GM12878 (cell line): ENCODE measurements at regions of chr7 and their contacts with region 1.

Region 1: DNA sequence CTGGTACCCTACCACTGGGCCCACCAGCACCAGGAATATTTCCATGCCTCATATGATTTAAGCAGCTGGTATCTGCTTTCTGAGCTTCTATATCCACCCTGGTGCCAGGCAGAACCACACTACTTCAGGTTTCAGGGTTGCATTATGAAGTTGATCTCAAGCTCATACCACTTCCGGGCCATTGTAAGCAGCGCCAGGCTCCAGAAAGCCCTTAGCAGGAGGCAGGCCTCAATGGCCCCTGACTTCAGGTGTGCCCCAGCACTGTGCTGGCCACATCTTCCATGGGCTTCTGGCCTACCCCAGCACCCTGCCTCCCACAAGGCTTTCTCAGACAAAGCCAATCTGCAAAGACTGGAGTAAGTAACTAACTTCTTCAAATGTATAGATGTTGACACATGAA is 391.3 kb upstream of the GRM3 start:
- DNase-seq: no peak
- ATAC-seq: no peak
- H3K4me3 ChIP-seq: no peak overlapping the region
- H3K27ac ChIP-seq: no peak overlapping the region
- H3K4me1 ChIP-seq: no peaks in the 10 kb centered on the region
- H3K27me3 ChIP-seq: no peaks in the 10 kb centered on the region
- CTCF ChIP-seq: no peak
- EP300 ChIP-seq: no peak
- POLR2A ChIP-seq: no peak
- RAD21 ChIP-seq: no peak

Region 2: DNA sequence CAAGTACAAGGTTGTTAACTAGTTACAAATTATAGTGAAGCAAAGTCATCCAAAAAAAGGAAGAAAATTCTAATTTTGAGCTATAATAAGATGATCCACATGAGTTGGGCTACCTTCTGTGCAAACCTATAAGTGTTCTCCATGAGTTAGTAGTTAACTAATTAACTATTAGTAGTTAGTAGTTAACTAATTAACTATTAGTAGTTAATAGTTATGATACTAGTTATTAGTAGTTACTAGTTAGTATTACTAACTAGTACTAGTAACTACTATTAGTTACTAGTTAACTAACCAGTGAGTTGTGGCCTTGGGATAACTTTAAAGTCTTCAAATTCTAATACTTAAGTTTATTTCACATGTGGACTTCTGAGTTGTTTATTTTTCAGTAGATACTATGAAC is 62.1 kb before region 1 on chr7:
- CTCF ChIA-PET with region 1: no interaction called
- POLR2A ChIA-PET with region 1: no interaction called
- RAD21 ChIA-PET with region 1: no interaction called
- SMC1A ChIA-PET with region 1: no interaction called
- in situ Hi-C with region 1: no loop called
- intact Hi-C with region 1: no loop called
- DNase-seq: no peak
- ATAC-seq: no peak
- H3K4me3 ChIP-seq: no peak overlapping the region
- H3K27ac ChIP-seq: no peak overlapping the region
- H3K4me1 ChIP-seq: no peaks in the 10 kb centered on the region
- H3K27me3 ChIP-seq: no peaks in the 10 kb centered on the region
- CTCF ChIP-seq: no peak
- EP300 ChIP-seq: no peak
- POLR2A ChIP-seq: no peak
- RAD21 ChIP-seq: no peak

Region 3: GRCh38 chr7:86280150-86280549 is 27.7 kb after region 1 on chr7:
- CTCF ChIA-PET with region 1: no interaction called
- POLR2A ChIA-PET with region 1: interaction called, 11 read pairs
- RAD21 ChIA-PET with region 1: no interaction called
- SMC1A ChIA-PET with region 1: no interaction called
- in situ Hi-C with region 1: no loop called
- intact Hi-C with region 1: no loop called
- DNase-seq: no peak
- ATAC-seq: no peak
- H3K4me3 ChIP-seq: no peak overlapping the region
- H3K27ac ChIP-seq: no peak overlapping the region
- H3K4me1 ChIP-seq: no peaks in the 10 kb centered on the region
- H3K27me3 ChIP-seq: no peaks in the 10 kb centered on the region
- CTCF ChIP-seq: no peak
- EP300 ChIP-seq: no peak
- POLR2A ChIP-seq: no peak
- RAD21 ChIP-seq: no peak